Lower leg skin (tissue), 4 donors: ENCODE measurements at regions of chr1 and their contacts with region 1.

Region 1: GRCh38 chr1:145978854-145979759 is 14.6 kb downstream of the POLR3GL start:
- DNase-seq: peak; percentile 98
- H3K4me3 ChIP-seq: no peak overlapping the region
- CTCF ChIP-seq: no peak
- POLR2A ChIP-seq: peak in 1 of 2 donors; percentile 33

Region 2: GRCh38 chr1:145845514-145846161 is 133.5 kb before region 1 on chr1 and contains the start of gene NUDT17:
- intact Hi-C with region 1: no loop called
- DNase-seq: peak; percentile 67 to 95
- H3K4me3 ChIP-seq: peak within 1 kb of the TSS; percentile 39
- CTCF ChIP-seq: peak in 1 of 3 donors; percentile 82
- POLR2A ChIP-seq: no peak
- total RNA-seq, gene NUDT17: 0.25 to 5.0 (median 2.5) TPM

Region 3: DNA sequence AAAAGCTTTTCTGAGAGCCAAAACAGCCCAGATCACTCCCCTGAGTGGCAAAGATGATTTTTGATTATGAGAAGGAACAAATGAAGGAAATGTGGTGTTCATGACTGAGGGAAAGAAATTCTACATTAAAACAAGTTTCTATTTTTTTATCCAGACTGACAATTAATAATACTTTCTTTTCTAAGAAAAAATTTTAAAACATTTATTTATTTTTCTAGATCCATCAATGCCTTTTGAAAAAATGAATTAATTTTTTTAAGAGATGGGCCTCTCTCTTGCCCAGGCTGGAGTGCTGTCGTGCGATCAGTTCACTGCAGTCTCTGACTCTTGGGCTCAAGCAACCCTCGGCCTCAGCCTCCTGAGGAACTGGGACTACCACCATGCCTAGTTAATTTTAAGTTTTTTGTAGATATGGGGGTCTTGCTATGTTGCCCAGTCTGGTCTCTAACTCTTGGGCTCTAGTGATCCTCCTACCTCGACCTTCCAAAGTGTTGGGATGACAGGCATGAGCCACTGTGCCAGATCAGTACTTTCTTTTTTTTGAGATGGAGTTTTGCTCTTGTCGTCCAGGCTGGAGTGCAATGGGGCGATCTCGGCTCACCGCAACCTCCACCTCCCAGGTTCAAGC is 28.5 kb after region 1 on chr1:
- intact Hi-C with region 1: loop called (anchors 2 kb)
- DNase-seq: no peak
- H3K4me3 ChIP-seq: no peak overlapping the region
- CTCF ChIP-seq: peak in 1 of 3 donors; percentile 2
- POLR2A ChIP-seq: no peak

Region 4: DNA sequence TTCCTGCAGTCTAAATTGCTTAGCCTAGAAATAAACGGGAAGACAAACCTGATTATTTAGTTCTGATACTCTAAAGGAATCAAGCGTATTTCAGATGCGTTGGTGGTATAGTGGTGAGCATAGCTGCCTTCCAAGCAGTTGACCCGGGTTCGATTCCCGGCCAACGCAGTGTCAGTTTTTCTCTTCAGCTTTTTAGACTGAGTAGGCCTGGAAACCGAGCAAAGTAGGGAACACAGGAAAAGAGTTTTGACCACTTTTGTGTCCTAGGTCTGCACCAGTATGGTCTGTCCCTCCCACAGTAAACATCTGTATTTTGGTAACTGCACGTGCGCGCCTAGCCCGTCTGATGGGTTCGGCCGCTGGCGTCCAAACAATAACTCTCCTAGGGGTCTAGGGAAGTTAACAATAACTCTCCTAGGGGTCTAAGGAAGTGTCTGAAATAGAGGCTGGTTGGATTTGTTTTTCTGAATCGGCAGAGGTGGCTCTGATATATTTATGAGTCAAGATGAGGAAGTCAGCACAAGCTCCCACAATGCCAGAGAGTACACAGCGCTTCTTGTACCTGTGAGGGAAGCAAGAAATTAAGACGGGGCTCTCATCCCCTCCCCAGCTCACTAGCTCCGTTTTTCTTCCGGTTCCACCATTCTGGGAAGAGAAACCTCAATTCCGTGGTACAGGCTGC is 58.0 kb after region 1 on chr1:
- intact Hi-C with region 1: no loop called
- DNase-seq: peak; percentile 80 to 96
- H3K4me3 ChIP-seq: peak overlapping the region; percentile 73
- CTCF ChIP-seq: no peak
- POLR2A ChIP-seq: no peak